ENCODE measurements at regions of chr16 and their contacts with region 1.

Region 1: DNA sequence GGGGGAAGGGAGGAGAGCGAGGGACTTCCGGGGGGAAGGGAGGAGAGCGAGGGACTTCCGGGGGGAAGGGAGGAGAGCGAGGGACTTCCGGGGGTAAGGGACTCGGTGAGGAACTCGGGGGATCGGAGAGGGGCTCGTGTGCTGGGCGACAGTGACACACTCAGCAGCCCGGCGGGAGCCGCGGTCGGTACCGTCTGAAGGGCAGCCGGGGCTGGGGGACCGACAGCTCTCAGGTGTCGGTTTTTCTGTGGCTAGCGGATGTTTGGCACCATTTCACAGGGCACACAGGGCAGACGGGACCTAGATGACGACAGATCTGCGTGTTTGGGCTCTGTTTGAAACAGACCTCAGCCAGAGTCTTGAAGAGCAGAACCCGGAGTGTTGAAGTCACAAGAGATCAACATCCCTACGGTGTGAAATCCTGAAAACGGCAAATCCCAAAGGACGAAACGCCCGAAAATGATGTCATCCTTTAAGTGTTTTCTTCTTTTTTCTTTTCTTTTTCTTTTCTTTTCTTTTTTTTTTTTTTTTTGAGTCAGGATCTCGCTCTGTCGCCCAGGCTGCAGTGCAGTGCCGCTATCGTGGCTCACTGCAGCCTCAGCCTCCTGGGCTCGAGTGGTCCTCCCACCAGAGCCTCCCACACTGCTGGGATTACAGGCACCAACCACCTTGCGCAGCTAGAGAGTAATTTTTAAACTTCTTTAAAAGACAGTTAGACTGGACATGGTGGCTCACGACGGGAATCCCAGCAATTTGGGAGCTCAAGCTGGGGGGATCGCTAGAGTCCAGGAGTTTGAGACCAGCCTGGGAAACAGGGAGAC is 23.9 kb downstream of the ZNF778 start:
- DNase-seq: peak; percentile 62 to 96 (median 78)
- ATAC-seq: peak; percentile 84
- H3K4me3 ChIP-seq: peak overlapping the region; percentile 67
- H3K4me3 Mint-ChIP-seq: peak overlapping the region; percentile 92
- H3K27ac ChIP-seq: peak overlapping the region; percentile 90 to 97
- H3K27ac Mint-ChIP-seq: peak overlapping the region; percentile 97
- H3K4me1 ChIP-seq: peaks cover 25% of the 10 kb centered on the region
- H3K4me1 Mint-ChIP-seq: peaks cover 16% of the 10 kb centered on the region
- H3K27me3 ChIP-seq: no peaks in the 10 kb centered on the region
- H3K27me3 Mint-ChIP-seq: no peaks in the 10 kb centered on the region
- CTCF ChIP-seq: no peak

Region 2: GRCh38 chr16:89222931-89223330 is 18.5 kb before region 1 on chr16:
- CTCF ChIA-PET with region 1: interaction called, 5 read pairs
- POLR2A ChIA-PET with region 1: interaction called, 14 read pairs
- intact Hi-C with region 1: loop called in 1 of 2 experiments (anchors 2 kb)
- DNase-seq: no peak
- ATAC-seq: no peak
- H3K4me3 ChIP-seq: no peak overlapping the region
- H3K4me3 Mint-ChIP-seq: no peak overlapping the region
- H3K27ac ChIP-seq: no peak overlapping the region
- H3K27ac Mint-ChIP-seq: no peak overlapping the region
- H3K4me1 ChIP-seq: peaks cover 9% of the 10 kb centered on the region
- H3K4me1 Mint-ChIP-seq: peaks cover 8% of the 10 kb centered on the region
- H3K27me3 ChIP-seq: no peaks in the 10 kb centered on the region
- H3K27me3 Mint-ChIP-seq: no peaks in the 10 kb centered on the region
- CTCF ChIP-seq: no peak

Region 3: DNA sequence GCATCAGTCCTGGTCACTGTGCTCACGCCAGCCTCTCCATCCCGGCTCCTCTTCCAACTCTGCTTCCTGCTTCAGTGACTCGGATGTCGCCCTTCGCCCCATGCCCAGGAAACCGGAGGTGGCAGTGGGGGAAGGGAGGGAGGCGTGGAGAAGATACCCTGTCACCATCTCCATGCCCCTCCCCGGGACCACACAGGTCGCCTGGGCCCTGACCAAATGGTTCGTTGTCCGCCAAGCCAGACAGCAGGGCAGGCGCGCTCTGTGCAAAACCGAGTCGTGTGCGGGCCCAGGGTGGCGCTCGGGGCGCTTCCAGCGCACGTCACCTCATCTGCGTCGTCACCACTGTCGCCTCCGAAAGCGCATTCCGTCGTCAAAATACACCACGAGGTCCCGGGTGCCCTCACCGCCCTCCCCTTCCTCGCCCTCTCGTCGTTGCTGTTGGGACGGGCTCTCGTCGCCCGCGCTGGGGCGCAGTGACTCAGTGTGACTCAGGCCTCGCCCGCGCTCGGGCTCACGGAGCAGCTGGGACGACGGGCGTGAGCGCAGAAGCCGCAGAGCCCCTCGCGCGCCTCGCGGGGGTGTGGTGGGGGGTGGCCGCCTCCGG is 15.4 kb after region 1 on chr16:
- CTCF ChIA-PET with region 1: interaction called, 3 read pairs
- POLR2A ChIA-PET with region 1: interaction called, 3 read pairs
- intact Hi-C with region 1: loop called in 1 of 2 experiments (anchors 2 kb)
- DNase-seq: peak; percentile 40 to 91 (median 72)
- ATAC-seq: peak; percentile 94
- H3K4me3 ChIP-seq: peak overlapping the region; percentile 44
- H3K4me3 Mint-ChIP-seq: peak overlapping the region; percentile 76
- H3K27ac ChIP-seq: no peak overlapping the region
- H3K27ac Mint-ChIP-seq: peak overlapping the region; percentile 85
- H3K4me1 ChIP-seq: peaks cover 19% of the 10 kb centered on the region
- H3K4me1 Mint-ChIP-seq: peaks cover 19% of the 10 kb centered on the region
- H3K27me3 ChIP-seq: peaks cover 12 to 23% of the 10 kb centered on the region in 2 experiments
- H3K27me3 Mint-ChIP-seq: peaks cover 13% of the 10 kb centered on the region
- CTCF ChIP-seq: no peak

Region 4: GRCh38 chr16:89277641-89278341 is 36.4 kb after region 1 on chr16:
- CTCF ChIA-PET with region 1: no interaction called
- POLR2A ChIA-PET with region 1: no interaction called
- intact Hi-C with region 1: no loop called
- DNase-seq: no peak
- ATAC-seq: no peak
- H3K4me3 ChIP-seq: no peak overlapping the region
- H3K4me3 Mint-ChIP-seq: no peak overlapping the region
- H3K27ac ChIP-seq: no peak overlapping the region
- H3K27ac Mint-ChIP-seq: peak overlapping the region; percentile 36
- H3K4me1 ChIP-seq: no peaks in the 10 kb centered on the region
- H3K4me1 Mint-ChIP-seq: no peaks in the 10 kb centered on the region
- H3K27me3 ChIP-seq: no peaks in the 10 kb centered on the region
- H3K27me3 Mint-ChIP-seq: no peaks in the 10 kb centered on the region
- CTCF ChIP-seq: no peak

Region 5: GRCh38 chr16:89289428-89290395 is 48.3 kb after region 1 on chr16:
- CTCF ChIA-PET with region 1: no interaction called
- POLR2A ChIA-PET with region 1: interaction called, 6 read pairs
- intact Hi-C with region 1: loop called (anchors 1 kb)
- DNase-seq: peak; percentile 57 to 81 (median 66)
- ATAC-seq: peak; percentile 88
- H3K4me3 ChIP-seq: no peak overlapping the region
- H3K4me3 Mint-ChIP-seq: no peak overlapping the region
- H3K27ac ChIP-seq: no peak overlapping the region
- H3K27ac Mint-ChIP-seq: peak overlapping the region; percentile 73
- H3K4me1 ChIP-seq: peaks cover 21% of the 10 kb centered on the region
- H3K4me1 Mint-ChIP-seq: peaks cover 10% of the 10 kb centered on the region
- H3K27me3 ChIP-seq: no peaks in the 10 kb centered on the region
- H3K27me3 Mint-ChIP-seq: no peaks in the 10 kb centered on the region
- CTCF ChIP-seq: peak; percentile 73

Region 6: GRCh38 chr16:89319883-89320781 is 78.7 kb after region 1 on chr16:
- CTCF ChIA-PET with region 1: interaction called, 7 read pairs
- POLR2A ChIA-PET with region 1: interaction called, 8 read pairs
- intact Hi-C with region 1: loop called (anchors 2 kb)
- DNase-seq: peak in 5 of 14 experiments; percentile 21 to 55 (median 45)
- ATAC-seq: no peak
- H3K4me3 ChIP-seq: no peak overlapping the region
- H3K4me3 Mint-ChIP-seq: peak overlapping the region; percentile 38
- H3K27ac ChIP-seq: no peak overlapping the region
- H3K27ac Mint-ChIP-seq: peak overlapping the region; percentile 98
- H3K4me1 ChIP-seq: peaks cover 100% of the 10 kb centered on the region
- H3K4me1 Mint-ChIP-seq: peaks cover 91% of the 10 kb centered on the region
- H3K27me3 ChIP-seq: no peaks in the 10 kb centered on the region
- H3K27me3 Mint-ChIP-seq: no peaks in the 10 kb centered on the region
- CTCF ChIP-seq: no peak

Measured in CD4-positive, alpha-beta T cell (primary cell).